Endothelial cell of umbilical vein (primary cell): ENCODE measurements at regions of chr22 and their contacts with region 1.

Region 1: GRCh38 chr22:37199103-37199759 is 11.2 kb upstream of the C1QTNF6 start:
- DNase-seq: peak; percentile 99
- H3K4me3 ChIP-seq: peak overlapping the region; percentile 39 to 56 (median 52)
- H3K27ac ChIP-seq: peak overlapping the region; percentile 71
- H3K4me1 ChIP-seq: peaks cover 28% of the 10 kb centered on the region
- H3K27me3 ChIP-seq: no peaks in the 10 kb centered on the region
- CTCF ChIP-seq: peak; percentile 99
- POLR2A ChIP-seq: peak; percentile 95

Region 2: GRCh38 chr22:37012262-37012904 is 186.8 kb before region 1 on chr22:
- CTCF ChIA-PET with region 1: no interaction called
- POLR2A ChIA-PET with region 1: no interaction called
- dilution Hi-C with region 1: no loop called
- intact Hi-C with region 1: no loop called
- DNase-seq: no peak
- H3K4me3 ChIP-seq: no peak overlapping the region
- H3K27ac ChIP-seq: no peak overlapping the region
- H3K4me1 ChIP-seq: peaks cover 14% of the 10 kb centered on the region
- H3K27me3 ChIP-seq: no peaks in the 10 kb centered on the region
- CTCF ChIP-seq: no peak
- POLR2A ChIP-seq: no peak

Region 3: DNA sequence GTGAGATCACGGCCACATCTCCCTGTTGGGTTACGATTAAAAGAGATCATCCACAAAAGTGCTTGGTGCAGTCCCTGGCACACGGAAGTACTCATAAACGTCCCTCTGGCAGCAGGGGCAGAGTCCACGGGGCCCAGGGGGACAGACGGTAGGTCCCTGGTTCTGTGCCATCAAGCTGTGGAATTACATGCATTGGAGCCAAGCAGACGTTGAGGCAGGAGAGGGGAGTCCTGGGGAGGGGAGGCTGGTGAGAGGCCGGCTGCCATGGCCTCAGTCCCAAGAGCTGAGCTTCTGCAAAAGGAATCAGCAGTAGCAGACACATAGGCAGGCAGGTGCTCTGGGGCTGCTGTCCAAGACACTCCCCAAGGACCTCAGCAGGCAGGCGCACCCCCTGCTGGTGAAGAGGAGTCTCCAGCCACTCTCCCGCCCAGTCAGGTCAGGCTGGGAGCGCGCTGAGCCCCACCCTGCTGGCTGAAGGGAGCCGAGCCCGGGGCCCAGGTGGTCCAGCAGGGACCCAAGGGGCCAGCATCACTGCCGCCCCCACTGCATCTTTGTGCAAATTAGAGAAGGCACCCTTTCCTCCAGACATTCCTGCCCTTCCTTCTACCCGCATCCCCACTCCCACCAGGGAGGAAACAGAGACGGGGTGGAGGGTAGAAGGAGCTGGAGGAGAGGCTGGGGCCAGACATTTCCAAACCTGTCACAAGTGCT is 155.2 kb before region 1 on chr22:
- CTCF ChIA-PET with region 1: interaction called, 15 read pairs
- POLR2A ChIA-PET with region 1: no interaction called
- dilution Hi-C with region 1: no loop called
- intact Hi-C with region 1: loop called (anchors 1 kb)
- DNase-seq: peak; percentile 44
- H3K4me3 ChIP-seq: no peak overlapping the region
- H3K27ac ChIP-seq: no peak overlapping the region
- H3K4me1 ChIP-seq: peaks cover 16% of the 10 kb centered on the region
- H3K27me3 ChIP-seq: no peaks in the 10 kb centered on the region
- CTCF ChIP-seq: peak; percentile 68 to 83
- POLR2A ChIP-seq: no peak

Region 4: GRCh38 chr22:37166675-37167066 is 32.6 kb before region 1 on chr22:
- CTCF ChIA-PET with region 1: interaction called, 69 read pairs
- POLR2A ChIA-PET with region 1: no interaction called
- dilution Hi-C with region 1: no loop called
- intact Hi-C with region 1: loop called (anchors 1 kb)
- DNase-seq: peak; percentile 82
- H3K4me3 ChIP-seq: no peak overlapping the region
- H3K27ac ChIP-seq: no peak overlapping the region
- H3K4me1 ChIP-seq: no peaks in the 10 kb centered on the region
- H3K27me3 ChIP-seq: no peaks in the 10 kb centered on the region
- CTCF ChIP-seq: peak; percentile 92 to 95
- POLR2A ChIP-seq: no peak

Region 5: GRCh38 chr22:37186228-37186996 is 12.8 kb before region 1 on chr22:
- CTCF ChIA-PET with region 1: interaction called, 48 read pairs
- POLR2A ChIA-PET with region 1: interaction called, 3 read pairs
- dilution Hi-C with region 1: no loop called
- intact Hi-C with region 1: loop called (anchors 1 kb)
- DNase-seq: peak; percentile 85
- H3K4me3 ChIP-seq: peak overlapping the region in 1 of 3 experiments; percentile 40
- H3K27ac ChIP-seq: peak overlapping the region; percentile 80
- H3K4me1 ChIP-seq: peaks cover 41% of the 10 kb centered on the region
- H3K27me3 ChIP-seq: no peaks in the 10 kb centered on the region
- CTCF ChIP-seq: no peak
- POLR2A ChIP-seq: peak; percentile 16

Region 6: DNA sequence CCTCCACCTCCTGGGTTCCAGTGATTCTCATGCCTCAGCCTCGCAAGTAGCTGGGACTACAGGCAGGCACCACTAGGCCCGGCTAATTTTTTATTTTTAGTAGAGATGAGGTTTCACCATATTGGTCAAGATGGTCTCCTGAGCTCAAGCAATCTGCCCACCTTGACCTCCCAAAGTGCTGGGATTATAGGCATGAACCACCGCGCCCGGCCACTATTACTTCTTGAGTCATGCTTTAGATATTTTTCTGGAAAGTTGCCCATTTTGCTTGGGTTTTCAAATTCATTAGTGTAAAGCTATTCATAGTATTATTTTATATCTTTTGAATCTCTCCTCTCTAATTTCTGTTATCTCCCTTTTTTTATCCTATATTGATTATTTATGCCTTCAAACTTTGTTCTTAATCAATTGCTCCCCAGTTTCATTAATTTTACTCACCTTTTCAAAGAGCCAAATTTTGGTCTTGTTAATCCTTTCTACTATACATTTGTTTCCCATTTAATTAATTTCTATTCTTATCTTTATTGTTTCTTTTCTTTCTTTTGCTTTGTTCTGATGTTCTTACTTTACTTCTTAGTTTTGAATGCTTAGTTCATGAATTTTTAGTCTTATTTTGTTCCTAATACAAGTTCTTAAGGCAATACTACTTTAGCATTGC is 55.1 kb after region 1 on chr22:
- CTCF ChIA-PET with region 1: interaction called, 42 read pairs
- POLR2A ChIA-PET with region 1: no interaction called
- dilution Hi-C with region 1: no loop called
- intact Hi-C with region 1: loop called (anchors 2 kb)
- DNase-seq: peak; percentile 76
- H3K4me3 ChIP-seq: peak overlapping the region in 2 of 3 experiments; percentile 10 to 43
- H3K27ac ChIP-seq: peak overlapping the region; percentile 99
- H3K4me1 ChIP-seq: peaks cover 31% of the 10 kb centered on the region
- H3K27me3 ChIP-seq: no peaks in the 10 kb centered on the region
- CTCF ChIP-seq: no peak
- POLR2A ChIP-seq: no peak